Mammary epithelial cell (primary cell): ENCODE measurements at regions of chr19 and their contacts with region 1.

Region 1: DNA sequence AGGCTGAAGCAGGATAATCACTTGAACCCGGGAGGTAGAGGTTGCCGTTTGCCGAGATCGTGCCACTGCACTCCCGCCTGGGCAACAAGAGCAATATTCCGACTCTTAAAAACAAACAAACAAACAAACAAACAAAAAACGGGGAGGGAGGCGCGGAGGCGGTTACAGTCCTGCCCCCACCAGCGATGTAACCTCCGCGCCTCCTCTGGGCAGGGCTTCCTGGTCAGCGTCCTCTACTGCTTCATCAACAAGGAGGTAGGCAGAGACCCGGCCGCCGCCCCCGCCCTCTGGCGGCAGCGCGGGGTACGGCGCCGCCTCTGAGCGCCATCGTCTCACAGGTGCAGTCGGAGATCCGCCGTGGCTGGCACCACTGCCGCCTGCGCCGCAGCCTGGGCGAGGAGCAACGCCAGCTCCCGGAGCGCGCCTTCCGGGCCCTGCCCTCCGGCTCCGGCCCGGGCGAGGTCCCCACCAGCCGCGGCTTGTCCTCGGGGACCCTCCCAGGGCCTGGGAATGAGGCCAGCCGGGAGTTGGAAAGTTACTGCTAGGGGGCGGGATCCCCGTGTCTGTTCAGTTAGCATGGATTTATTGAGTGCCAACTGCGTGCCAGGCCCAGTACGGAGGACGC is 10.2 kb downstream of the SNRPD2 start:
- DNase-seq: peak; percentile 83
- H3K4me3 ChIP-seq: peak overlapping the region in 1 of 3 experiments; percentile 13
- H3K27ac ChIP-seq: no peak overlapping the region
- H3K4me1 ChIP-seq: peaks cover 17% of the 10 kb centered on the region
- H3K27me3 ChIP-seq: no peaks in the 10 kb centered on the region
- CTCF ChIP-seq: peak; percentile 75 to 92

Region 2: DNA sequence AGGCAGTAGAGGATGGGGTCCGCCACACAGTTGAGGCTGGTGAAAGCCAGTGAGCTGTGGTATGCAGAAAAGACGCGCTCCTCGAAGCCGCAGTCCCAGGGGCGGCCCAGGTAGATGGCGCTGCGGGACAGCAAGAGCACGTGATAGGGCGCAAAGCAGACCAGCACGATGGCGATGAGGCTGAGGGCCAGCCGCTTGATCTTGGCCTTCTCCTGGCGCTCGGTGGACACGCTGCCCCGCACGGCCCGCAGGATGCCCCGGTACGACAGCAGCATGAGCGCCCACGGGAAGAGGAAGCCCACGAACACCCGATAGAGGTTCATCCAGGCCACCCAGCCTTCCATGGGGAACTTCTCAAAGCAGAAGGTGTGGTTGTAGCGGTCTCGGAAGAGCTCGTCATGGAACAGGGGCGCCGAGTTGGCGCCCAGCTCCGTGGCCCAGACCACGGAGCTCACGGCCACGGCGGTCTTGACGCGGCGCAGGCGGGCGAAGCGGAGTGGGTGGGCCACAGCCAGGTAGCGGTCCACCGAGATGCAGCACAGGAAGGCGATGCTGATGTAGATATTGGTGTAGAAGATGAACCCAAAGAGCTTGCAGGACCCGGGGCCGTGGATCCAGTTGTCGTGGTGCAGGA is 90.4 kb before region 1 on chr19:
- CTCF ChIA-PET with region 1: no interaction called
- dilution Hi-C with region 1: no loop called
- in situ Hi-C with region 1: no loop called
- intact Hi-C with region 1: loop called (anchors 1 kb)
- DNase-seq: peak; percentile 34
- H3K4me3 ChIP-seq: no peak overlapping the region
- H3K27ac ChIP-seq: no peak overlapping the region
- H3K4me1 ChIP-seq: peaks cover 5% of the 10 kb centered on the region
- H3K27me3 ChIP-seq: no peaks in the 10 kb centered on the region
- CTCF ChIP-seq: peak; percentile 51 to 71

Region 3: GRCh38 chr19:45607071-45608029 is 74.2 kb before region 1 on chr19:
- CTCF ChIA-PET with region 1: no interaction called
- dilution Hi-C with region 1: no loop called
- in situ Hi-C with region 1: no loop called
- intact Hi-C with region 1: loop called (anchors 1 kb)
- DNase-seq: peak; percentile 48
- H3K4me3 ChIP-seq: peak overlapping the region in 1 of 3 experiments; percentile 28
- H3K27ac ChIP-seq: no peak overlapping the region
- H3K4me1 ChIP-seq: peaks cover 6% of the 10 kb centered on the region
- H3K27me3 ChIP-seq: no peaks in the 10 kb centered on the region
- CTCF ChIP-seq: peak; percentile 71 to 94

Region 4: GRCh38 chr19:45973578-45974338 is 292.3 kb after region 1 on chr19 and contains the start of gene NOVA2:
- CTCF ChIA-PET with region 1: no interaction called
- dilution Hi-C with region 1: no loop called
- in situ Hi-C with region 1: no loop called
- intact Hi-C with region 1: no loop called
- DNase-seq: peak; percentile 47
- H3K4me3 ChIP-seq: no peak within 1 kb of the TSS
- H3K27ac ChIP-seq: no peak within 1 kb of the TSS
- H3K4me1 ChIP-seq: peaks cover 3% of the 10 kb centered on the region
- H3K27me3 ChIP-seq: peaks cover 2% of the 10 kb centered on the region
- CTCF ChIP-seq: no peak
- total RNA-seq, gene NOVA2: not detected